ENCODE measurements at regions of chr6 and their contacts with region 1.

Region 1: DNA sequence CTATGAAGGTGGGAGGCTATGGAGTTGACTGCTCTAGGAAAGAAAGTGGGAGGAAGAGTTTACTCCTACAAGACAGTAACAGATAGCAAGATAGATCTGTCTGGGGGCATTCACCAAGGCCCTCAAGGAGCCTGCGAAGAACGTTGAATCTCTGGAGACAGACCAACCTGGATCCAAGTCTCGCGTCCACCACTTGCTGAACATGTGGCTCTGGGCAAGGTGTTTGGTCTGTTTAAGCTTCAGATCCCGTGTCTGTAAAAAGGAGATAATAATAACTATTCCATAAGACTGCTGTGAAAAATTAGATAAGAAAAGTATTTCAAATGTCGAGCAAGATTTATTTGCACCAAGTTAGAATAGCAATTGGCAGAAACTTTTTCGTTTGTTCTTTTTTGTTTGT is 8.1 kb upstream of the EEF1A1 start:
- DNase-seq: no peak
- ATAC-seq: no peak
- H3K4me3 ChIP-seq: no peak overlapping the region
- H3K27ac ChIP-seq: no peak overlapping the region
- H3K4me1 ChIP-seq: peaks cover 0 to 4% (median 3%) of the 10 kb centered on the region in 9 donors
- H3K27me3 ChIP-seq: peaks cover 0 to 21% (median 3%) of the 10 kb centered on the region in 7 donors
- CTCF ChIP-seq: no peak

Region 2: GRCh38 chr6:73079978-73080377 is 448.9 kb before region 1 on chr6:
- intact Hi-C with region 1: no loop called
- DNase-seq: no peak
- ATAC-seq: no peak
- H3K4me3 ChIP-seq: no peak overlapping the region
- H3K27ac ChIP-seq: no peak overlapping the region
- H3K4me1 ChIP-seq: no peaks in the 10 kb centered on the region
- H3K27me3 ChIP-seq: no peaks in the 10 kb centered on the region
- CTCF ChIP-seq: no peak

Region 3: DNA sequence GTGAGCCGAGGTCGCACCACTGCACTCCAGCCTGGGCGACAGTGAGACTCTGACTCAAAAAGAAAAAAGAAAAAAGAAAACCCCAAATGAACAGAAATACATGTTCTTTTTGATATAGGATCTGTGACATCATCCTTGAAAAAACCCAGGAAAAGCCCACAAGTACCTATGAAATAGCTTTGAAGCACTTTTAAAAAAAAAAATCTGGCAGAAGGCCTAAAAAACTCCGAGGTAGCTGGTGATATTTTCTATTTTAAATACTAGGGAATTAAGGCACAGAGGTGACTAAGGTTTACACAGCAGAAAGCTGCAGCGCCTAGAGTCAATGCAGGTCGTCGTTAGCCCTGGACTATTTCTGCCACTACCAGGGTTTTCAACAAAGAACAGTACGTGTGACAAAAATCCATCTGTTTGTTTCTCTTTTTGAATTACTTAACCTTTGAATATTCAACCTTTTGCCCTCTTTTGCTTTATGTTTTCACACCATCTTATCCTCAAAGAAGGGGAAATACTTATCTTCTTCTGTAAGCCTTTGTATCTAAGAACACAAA is 31.4 kb after region 1 on chr6:
- intact Hi-C with region 1: loop called in 6 of 10 experiments (anchors 5 kb)
- DNase-seq: no peak
- ATAC-seq: no peak
- H3K4me3 ChIP-seq: no peak overlapping the region
- H3K27ac ChIP-seq: no peak overlapping the region
- H3K4me1 ChIP-seq: peaks cover 0 to 6% (median 0%) of the 10 kb centered on the region in 9 donors
- H3K27me3 ChIP-seq: peaks cover 0 to 4% (median 0%) of the 10 kb centered on the region in 7 donors
- CTCF ChIP-seq: no peak

Region 4: DNA sequence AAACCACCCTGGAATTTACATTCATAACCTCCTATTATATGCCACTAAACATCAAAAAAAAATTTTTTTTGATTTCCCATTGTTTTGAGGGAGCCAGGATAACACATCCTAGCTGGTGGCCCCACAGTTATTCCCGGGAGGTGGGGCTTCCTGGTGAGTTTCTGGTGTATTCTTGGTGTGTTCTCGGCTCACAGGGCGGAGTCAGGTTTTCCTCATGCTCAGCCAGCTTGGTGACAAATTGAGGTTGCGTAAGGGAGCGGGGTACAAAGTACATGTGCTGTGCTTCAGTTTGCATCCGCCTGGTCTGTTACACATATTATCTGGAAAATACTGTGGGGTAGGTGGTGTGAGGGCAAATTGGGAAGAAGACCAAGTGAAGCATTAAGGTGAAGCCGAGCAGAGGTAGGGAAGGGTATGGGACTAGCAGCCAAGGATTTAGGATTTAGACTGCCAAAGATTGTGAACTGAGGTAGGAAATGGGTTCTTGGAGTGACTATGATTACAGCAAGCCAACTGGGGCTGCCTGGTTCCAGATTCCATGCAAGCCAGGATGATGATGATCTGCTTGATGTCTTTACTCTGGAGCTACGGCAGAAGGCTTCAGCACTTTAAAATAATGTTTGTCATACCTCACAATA is 38.2 kb after region 1 on chr6:
- intact Hi-C with region 1: loop called in 6 of 10 experiments (anchors 5 kb)
- DNase-seq: peak; percentile 38 to 71
- ATAC-seq: peak in 7 of 8 donors; percentile 61 to 90 (median 72)
- H3K4me3 ChIP-seq: no peak overlapping the region
- H3K27ac ChIP-seq: peak overlapping the region; percentile 27 to 84 (median 66)
- H3K4me1 ChIP-seq: peaks cover 0 to 22% (median 7%) of the 10 kb centered on the region in 9 donors
- H3K27me3 ChIP-seq: peaks cover 0 to 4% (median 0%) of the 10 kb centered on the region in 7 donors
- CTCF ChIP-seq: no peak

Region 5: DNA sequence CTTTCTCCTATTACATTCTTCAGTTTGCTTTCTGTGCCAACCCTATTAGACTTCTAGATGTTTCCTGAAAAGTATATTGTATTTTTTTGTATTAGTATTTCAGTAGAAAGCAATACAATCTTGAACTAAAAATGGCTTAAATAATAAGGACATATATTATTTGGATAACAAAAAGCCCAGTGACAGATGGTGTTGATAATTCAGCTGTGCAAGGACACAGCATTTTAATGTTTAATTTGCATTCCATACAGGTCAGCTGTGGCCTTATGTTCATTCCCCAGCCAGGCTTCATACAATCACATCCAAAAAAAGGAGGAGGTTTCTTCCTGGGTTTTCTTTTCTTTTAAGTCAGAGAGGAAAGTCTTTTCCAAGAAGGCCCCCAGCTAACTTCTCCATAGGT is 404.0 kb after region 1 on chr6:
- intact Hi-C with region 1: no loop called
- DNase-seq: no peak
- ATAC-seq: no peak
- H3K4me3 ChIP-seq: no peak overlapping the region
- H3K27ac ChIP-seq: no peak overlapping the region
- H3K4me1 ChIP-seq: no peaks in the 10 kb centered on the region
- H3K27me3 ChIP-seq: no peaks in the 10 kb centered on the region
- CTCF ChIP-seq: no peak